PC-9 (cell line): ENCODE measurements at regions of chr12 and their contacts with region 1.

Region 1: DNA sequence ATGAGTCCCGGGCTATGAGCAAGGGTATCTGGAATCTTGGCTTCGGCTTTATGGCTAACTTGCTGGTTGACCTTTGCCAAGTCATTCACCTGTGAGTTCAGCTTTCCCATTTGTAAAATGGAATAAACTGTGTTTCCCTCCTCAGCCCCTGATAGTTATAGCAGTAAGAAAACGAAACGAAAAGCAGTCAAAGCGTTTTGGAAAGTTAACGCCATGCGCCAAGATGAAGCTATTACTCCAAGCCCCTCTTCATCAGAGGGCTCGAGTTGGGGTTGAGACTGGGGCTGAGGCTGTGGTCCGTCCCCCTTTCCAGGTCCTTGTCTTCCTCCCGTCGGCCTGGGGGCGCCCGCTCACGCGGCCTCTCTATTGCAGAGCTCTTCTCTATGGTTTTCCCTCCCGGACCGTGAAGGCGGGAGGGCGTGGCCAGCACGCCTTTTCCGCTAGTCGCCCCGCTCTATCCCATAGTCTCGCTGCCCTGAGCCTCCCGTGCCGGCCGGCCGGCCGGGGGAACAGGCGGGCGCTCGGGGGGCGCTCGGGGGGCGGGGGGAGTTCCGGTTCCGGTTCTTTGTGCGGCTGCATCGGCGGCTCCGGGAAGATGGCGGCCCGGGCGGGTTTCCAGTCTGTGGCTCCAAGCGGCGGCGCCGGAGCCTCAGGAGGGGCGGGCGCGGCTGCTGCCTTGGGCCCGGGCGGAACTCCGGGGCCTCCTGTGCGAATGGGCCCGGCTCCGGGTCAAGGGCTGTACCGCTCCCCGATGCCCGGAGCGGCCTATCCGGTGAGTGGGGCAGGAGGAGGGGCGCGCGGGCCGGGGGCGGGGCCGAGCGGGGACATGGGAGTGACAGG is at the start of gene SMARCD1:
- DNase-seq: peak; percentile 78 to 82
- H3K4me3 ChIP-seq: peak within 1 kb of the TSS; percentile 99
- H3K27ac ChIP-seq: peak within 1 kb of the TSS; percentile 69
- H3K4me1 ChIP-seq: peaks cover 32% of the 10 kb centered on the region
- H3K27me3 ChIP-seq: no peaks in the 10 kb centered on the region
- CTCF ChIP-seq: peak; percentile 51; the same call in 1 of the 2 replicates
- total RNA-seq, gene SMARCD1: 48.8 and 66.7 TPM in 2 replicates

Region 2: DNA sequence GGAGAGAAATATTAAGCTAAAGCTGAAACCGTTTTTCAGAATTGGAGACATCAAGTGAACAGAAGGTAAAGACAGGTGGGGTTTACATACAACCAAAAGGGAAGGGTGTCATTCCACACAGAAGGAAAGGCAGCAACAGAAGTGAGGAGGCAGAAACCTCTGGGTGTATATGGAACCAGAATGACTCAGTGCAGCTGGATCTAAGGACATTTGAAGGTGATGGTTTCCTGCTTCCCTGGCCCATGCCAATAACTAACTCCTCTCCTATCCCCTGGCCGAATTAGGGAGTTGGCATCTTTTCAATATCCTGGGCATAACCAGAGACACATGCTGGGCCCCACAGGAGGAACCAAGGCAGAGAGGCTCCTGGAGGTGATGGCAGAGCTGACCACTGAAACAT is 265.2 kb before region 1 on chr12:
- CTCF ChIA-PET with region 1: no interaction called
- POLR2A ChIA-PET with region 1: interaction called, 24 read pairs
- intact Hi-C with region 1: no loop called
- DNase-seq: no peak
- H3K4me3 ChIP-seq: no peak overlapping the region
- H3K27ac ChIP-seq: no peak overlapping the region
- H3K4me1 ChIP-seq: no peaks in the 10 kb centered on the region; the same call in 1 of the 2 replicates
- H3K27me3 ChIP-seq: no peaks in the 10 kb centered on the region
- CTCF ChIP-seq: no peak

Region 3: DNA sequence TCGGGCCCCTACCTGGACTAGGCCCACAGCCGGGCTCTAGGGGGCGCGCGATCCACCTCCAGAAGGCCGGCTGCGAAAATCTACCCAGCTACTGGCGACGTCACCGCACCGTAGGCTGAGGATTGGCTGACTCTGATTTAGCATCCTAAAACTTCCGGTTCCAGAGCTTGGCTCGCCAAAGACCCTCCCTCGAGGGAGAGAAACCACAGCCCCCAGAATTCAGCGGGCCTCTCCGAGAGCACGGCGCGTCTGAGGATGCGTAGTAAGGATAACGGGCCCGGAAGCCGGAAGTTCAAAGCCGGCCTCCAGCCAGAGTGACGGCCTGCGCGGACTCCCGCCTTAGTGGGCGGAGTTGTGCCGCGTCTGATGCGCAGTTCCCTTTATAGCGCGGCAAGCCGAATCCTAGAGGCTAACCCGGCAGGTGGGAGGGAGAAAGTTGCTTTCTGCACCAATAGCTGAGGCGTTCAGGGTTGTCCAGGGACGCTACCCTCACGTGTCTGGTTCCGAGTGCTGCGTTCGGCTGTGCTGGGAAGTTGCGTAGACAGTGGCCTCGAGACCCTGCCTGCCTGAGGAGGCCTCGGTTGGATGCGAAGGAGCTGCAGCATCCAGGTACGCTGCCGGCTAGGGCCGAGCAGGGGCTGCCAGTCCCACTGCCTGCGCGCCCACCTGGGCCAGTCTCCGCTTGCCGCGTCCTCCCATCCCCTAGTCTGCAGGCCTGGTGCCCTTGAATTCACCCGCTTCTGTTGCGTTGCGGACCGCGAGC is 26.9 kb after region 1 on chr12 and contains the start of gene COX14:
- CTCF ChIA-PET with region 1: interaction called, 21 read pairs
- POLR2A ChIA-PET with region 1: interaction called, 10 read pairs
- intact Hi-C with region 1: loop called (anchors 2 kb)
- DNase-seq: peak; percentile 98
- H3K4me3 ChIP-seq: peak within 1 kb of the TSS; percentile 74
- H3K27ac ChIP-seq: peak within 1 kb of the TSS; percentile 80
- H3K4me1 ChIP-seq: peaks cover 43% of the 10 kb centered on the region
- H3K27me3 ChIP-seq: no peaks in the 10 kb centered on the region
- CTCF ChIP-seq: peak; percentile 86; the same call in 1 of the 2 replicates
- total RNA-seq, gene COX14: 53.9 and 76.1 TPM in 2 replicates

Region 4: GRCh38 chr12:50132505-50133135 is 47.6 kb after region 1 on chr12:
- CTCF ChIA-PET with region 1: no interaction called
- POLR2A ChIA-PET with region 1: no interaction called
- intact Hi-C with region 1: no loop called
- DNase-seq: no peak
- H3K4me3 ChIP-seq: no peak overlapping the region
- H3K27ac ChIP-seq: no peak overlapping the region
- H3K4me1 ChIP-seq: no peaks in the 10 kb centered on the region
- H3K27me3 ChIP-seq: no peaks in the 10 kb centered on the region
- CTCF ChIP-seq: no peak

Region 5: DNA sequence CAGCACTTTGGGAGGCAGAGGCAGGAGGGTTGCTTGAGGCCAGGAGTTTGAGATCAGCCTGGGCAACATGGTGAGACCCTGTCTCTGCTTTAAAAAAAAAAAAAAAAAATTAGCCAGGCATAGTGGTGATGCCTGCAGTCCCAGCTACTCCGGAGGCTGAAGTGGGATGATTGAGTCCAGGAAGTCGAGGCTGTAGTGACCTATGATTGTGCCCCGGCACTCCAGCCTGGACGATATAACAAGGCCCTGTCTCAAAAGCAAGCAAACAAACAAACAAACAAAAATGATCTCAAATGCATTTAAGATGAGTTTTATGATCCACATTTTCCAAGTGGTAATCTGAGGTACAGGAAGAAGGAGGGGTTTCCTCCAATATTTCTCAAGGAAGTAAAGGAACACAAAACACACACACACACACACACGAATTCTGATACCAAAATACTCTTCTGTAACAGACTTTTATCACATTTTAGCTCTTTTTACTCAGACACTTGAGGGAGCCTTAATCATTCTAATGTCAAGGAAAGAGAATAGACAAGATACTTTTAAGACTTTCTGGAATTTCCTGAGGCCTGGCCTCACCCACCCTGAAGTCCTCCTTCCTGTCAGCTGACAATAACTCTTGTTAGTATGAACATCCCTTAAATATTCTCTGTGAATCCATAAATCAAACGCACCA is 126.5 kb after region 1 on chr12:
- CTCF ChIA-PET with region 1: no interaction called
- POLR2A ChIA-PET with region 1: interaction called, 15 read pairs
- intact Hi-C with region 1: no loop called
- DNase-seq: no peak
- H3K4me3 ChIP-seq: no peak overlapping the region
- H3K27ac ChIP-seq: peak overlapping the region; percentile 33; the same call in 1 of the 2 replicates
- H3K4me1 ChIP-seq: peaks cover 31% of the 10 kb centered on the region
- H3K27me3 ChIP-seq: no peaks in the 10 kb centered on the region
- CTCF ChIP-seq: no peak

Region 6: GRCh38 chr12:50400598-50401364 is 315.8 kb after region 1 on chr12 and contains the start of gene LARP4:
- CTCF ChIA-PET with region 1: interaction called, 6 read pairs
- POLR2A ChIA-PET with region 1: no interaction called
- intact Hi-C with region 1: loop called (anchors 10 kb)
- DNase-seq: peak; percentile 86 to 93
- H3K4me3 ChIP-seq: peak within 1 kb of the TSS; percentile 83
- H3K27ac ChIP-seq: peak within 1 kb of the TSS; percentile 88
- H3K4me1 ChIP-seq: peaks cover 50% of the 10 kb centered on the region
- H3K27me3 ChIP-seq: no peaks in the 10 kb centered on the region
- CTCF ChIP-seq: no peak
- total RNA-seq, gene LARP4: 49.2 and 74.2 TPM in 2 replicates

Region 7: DNA sequence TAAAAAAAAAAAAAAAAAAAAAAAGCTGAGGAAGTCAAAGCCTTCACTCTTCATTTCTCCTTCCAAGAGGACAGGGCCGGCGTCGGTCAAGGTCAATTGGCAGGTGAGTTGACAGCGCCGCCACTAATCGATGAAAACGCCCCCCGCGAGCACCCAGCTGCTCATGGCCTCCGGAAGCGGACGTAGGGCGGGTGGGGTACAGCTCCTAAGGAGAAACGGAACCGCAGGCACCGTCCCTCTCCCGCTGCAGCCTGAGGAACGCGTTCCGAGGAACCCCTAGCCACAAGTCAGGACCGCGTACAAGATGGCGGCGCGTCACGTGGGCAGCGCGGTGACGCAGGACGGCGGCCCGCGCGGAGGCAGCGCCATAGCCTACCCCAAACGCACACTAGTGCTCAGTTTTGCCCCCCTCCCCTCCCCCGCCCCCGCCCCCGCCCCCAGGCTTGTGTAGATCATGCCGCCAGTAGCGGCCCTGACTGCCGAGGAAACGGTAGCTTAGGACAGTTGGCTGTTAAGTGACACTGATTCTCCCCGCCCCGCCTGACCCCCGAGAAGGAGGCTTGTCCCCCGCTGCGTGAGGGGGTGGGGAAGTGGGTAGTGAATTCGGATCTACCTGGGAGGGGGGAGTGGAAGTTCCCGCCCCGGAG is 678.8 kb after region 1 on chr12 and contains the start of gene ATF1:
- CTCF ChIA-PET with region 1: no interaction called
- POLR2A ChIA-PET with region 1: interaction called, 10 read pairs
- intact Hi-C with region 1: no loop called
- DNase-seq: peak; percentile 79 to 86
- H3K4me3 ChIP-seq: peak within 1 kb of the TSS; percentile 88
- H3K27ac ChIP-seq: peak within 1 kb of the TSS; percentile 92
- H3K4me1 ChIP-seq: peaks cover 27% of the 10 kb centered on the region
- H3K27me3 ChIP-seq: no peaks in the 10 kb centered on the region
- CTCF ChIP-seq: no peak
- total RNA-seq, gene ATF1: 29.8 and 37.9 TPM in 2 replicates